Cardiac septum (tissue), 1 donor: ENCODE measurements at regions of chr3 and their contacts with region 1.

Region 1: GRCh38 chr3:43389388-43390254 is 103.3 kb downstream of the SNRK start:
- DNase-seq: peak; percentile 88

Region 2: GRCh38 chr3:43246976-43247375 is 142.6 kb before region 1 on chr3:
- intact Hi-C with region 1: loop called (anchors 5 kb)
- DNase-seq: no peak

Region 3: GRCh38 chr3:43477600-43477999 is 88.0 kb after region 1 on chr3:
- intact Hi-C with region 1: loop called (anchors 5 kb)
- DNase-seq: no peak

Region 4: GRCh38 chr3:43584043-43584826 is 194.6 kb after region 1 on chr3:
- intact Hi-C with region 1: no loop called
- DNase-seq: no peak